Tibial artery (tissue), 4 donors: ENCODE measurements at regions of chr6 and their contacts with region 1.

Region 1: DNA sequence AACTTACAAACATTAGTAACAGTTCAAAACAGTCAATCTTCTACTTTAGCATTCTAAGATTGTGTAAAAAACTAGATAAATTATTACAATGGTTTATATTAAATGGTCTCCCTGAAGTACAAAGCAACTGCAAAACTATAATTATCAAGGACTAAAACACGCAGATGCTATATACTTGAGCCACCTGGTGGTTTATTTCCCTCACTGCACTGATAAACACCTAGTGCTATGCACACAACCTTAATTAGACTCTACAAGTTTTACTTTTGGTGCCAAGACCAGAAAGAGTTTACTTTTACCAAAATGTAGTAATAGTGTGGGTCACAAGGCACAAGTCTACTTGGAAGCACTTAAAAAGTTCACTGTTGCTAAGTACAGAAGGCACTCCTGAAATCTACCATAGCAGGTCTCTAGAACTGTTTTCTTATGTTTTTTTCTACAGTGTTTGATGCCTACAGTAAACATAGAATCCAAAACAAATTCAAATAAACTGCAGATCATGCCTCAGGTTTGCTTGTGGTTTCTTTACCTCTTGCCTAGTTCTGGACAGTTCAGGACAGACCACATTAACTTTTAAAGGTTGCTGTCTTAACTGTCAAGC is 49.2 kb downstream of the GMDS start:
- DNase-seq: peak in 1 of 2 donors; percentile 51
- H3K4me3 ChIP-seq: no peak overlapping the region
- H3K27ac ChIP-seq: peak overlapping the region in 1 of 2 donors; percentile 8
- H3K4me1 ChIP-seq: peaks cover 0 to 22% (median 5%) of the 10 kb centered on the region in 4 donors
- H3K27me3 ChIP-seq: no peaks in the 10 kb centered on the region
- CTCF ChIP-seq: peak; percentile 74 to 90

Region 2: GRCh38 chr6:1604158-1605030 is 591.8 kb before region 1 on chr6:
- intact Hi-C with region 1: loop called (anchors 5 kb)
- DNase-seq: peak; percentile 57 to 89
- H3K4me3 ChIP-seq: peak overlapping the region; percentile 70 to 91
- H3K27ac ChIP-seq: peak overlapping the region; percentile 89 to 98
- H3K4me1 ChIP-seq: peaks cover 4 to 21% (median 15%) of the 10 kb centered on the region in 4 donors
- H3K27me3 ChIP-seq: no peaks in the 10 kb centered on the region
- CTCF ChIP-seq: peak; percentile 97 to 99

Region 3: DNA sequence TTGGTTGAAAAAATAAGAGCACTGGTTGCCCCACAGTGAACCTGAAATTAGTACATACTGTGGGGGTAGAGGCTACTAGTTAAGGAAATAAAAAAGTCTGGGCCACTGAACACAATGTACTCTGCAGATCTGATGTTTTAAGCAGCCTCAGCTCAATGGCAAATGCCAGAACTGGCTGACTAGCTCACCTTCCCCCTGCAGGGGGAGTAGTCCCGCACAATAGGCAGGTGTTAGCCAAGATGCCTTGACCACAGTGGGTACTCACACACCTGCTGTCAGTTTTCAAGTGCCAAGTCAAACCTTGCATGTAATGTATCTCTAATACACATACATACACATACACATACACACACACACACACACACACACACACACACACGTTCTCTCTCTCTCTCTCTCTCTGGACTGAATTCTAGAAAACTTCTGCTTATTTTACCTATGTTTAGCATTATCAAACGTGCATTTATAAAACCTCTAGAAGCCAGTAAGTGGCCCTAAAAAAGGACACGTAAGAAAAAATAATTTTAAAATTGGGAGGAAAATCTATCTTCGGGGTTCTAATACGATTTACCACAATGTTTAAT is 13.1 kb after region 1 on chr6:
- intact Hi-C with region 1: no loop called
- DNase-seq: no peak
- H3K4me3 ChIP-seq: no peak overlapping the region
- H3K27ac ChIP-seq: no peak overlapping the region
- H3K4me1 ChIP-seq: no peaks in the 10 kb centered on the region
- H3K27me3 ChIP-seq: no peaks in the 10 kb centered on the region
- CTCF ChIP-seq: peak; percentile 22 to 31